Heart left ventricle (tissue), 16 donors: ENCODE measurements at regions of chr9 and their contacts with region 1.

Region 1: GRCh38 chr9:21153336-21154017 is 11.8 kb upstream of the IFNW1 start:
- DNase-seq: no peak
- ATAC-seq: peak in 2 of 4 donors; percentile 22 to 26
- H3K4me3 ChIP-seq: no peak overlapping the region
- H3K27ac ChIP-seq: peak overlapping the region in 1 of 12 donors; percentile 18
- H3K4me1 ChIP-seq: peaks cover 0 to 14% (median 1%) of the 10 kb centered on the region in 12 donors
- H3K27me3 ChIP-seq: peaks cover 0 to 3% (median 0%) of the 10 kb centered on the region in 9 donors
- CTCF ChIP-seq: no peak
- POLR2A ChIP-seq: no peak

Region 2: DNA sequence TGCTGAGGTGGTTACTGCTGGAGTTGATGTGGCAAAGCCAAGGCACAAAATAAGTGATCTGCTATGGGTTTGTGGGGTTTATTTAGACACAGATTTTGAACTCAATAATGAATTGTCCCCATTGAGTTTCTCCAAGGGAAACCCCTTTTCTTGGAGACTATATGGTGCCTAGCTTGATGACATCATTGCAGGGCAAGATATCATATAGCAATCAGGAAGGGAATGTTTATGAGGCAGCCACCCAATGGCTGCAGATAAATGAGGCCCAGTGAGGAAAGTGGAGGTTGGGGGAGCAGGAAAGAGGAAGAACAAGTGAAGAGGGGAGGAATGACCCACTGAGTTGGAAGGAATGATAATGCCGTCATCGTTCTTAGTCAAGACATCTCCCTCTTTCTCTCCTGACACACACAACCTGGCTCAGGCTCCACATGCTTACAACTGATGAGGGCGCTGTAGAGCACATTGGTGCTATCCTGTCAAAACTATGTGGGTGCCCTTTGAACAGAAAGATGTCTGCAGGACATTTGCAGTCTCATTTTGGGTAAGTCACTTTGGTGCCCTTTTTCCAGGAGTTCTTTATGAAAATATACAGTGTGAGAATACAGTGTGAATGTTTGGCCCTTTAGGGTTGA is 17.9 kb before region 1 on chr9:
- intact Hi-C with region 1: loop called in 1 of 10 experiments (anchors 2 kb)
- DNase-seq: no peak
- ATAC-seq: no peak
- H3K4me3 ChIP-seq: no peak overlapping the region
- H3K27ac ChIP-seq: no peak overlapping the region
- H3K4me1 ChIP-seq: no peaks in the 10 kb centered on the region
- H3K27me3 ChIP-seq: no peaks in the 10 kb centered on the region
- CTCF ChIP-seq: no peak
- POLR2A ChIP-seq: no peak